ENCODE measurements at regions of chr13 and their contacts with region 1.

Region 1: GRCh38 chr13:44879463-44880058 is 109.7 kb downstream of the NUFIP1 start:
- DNase-seq: no peak
- H3K4me3 ChIP-seq: no peak overlapping the region
- CTCF ChIP-seq: no peak
- POLR2A ChIP-seq: no peak

Region 2: GRCh38 chr13:44470638-44471562 is 408.7 kb before region 1 on chr13:
- intact Hi-C with region 1: loop called (anchors 5 kb)
- DNase-seq: no peak
- H3K4me3 ChIP-seq: no peak overlapping the region
- CTCF ChIP-seq: no peak
- POLR2A ChIP-seq: no peak

Region 3: DNA sequence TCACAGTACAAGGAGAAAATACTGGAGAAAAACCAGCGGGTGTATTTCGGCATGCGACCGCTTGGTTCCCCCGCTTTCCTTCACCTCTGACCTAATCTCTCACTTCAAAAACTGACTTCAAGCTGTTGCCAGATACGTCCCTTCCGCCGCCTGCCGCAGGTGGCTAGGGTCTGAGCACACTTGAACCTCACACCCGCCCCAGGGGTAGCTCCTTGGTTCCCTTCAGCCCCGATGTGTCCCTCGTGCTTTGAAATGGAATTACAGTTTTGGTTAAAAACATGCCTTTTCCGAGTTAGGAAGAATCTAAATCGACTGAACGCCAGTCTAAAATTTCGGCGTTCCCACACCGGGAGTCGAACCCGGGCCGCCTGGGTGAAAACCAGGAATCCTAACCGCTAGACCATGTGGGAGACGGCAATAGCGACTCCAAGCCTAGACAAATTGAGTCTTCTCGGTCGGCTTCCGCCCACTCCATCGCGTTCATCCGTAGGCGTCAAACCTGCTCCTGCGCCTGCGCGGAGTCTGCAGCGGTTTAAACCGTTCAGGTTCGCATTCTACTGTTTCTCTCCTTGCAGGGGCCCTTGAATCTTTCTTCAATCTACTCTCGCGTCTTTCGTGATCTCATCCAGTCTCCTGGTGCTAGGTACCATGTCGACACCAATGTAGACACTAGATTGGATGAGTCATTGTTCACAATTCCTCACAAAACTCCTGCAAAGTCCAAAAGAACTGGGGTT is 38.2 kb after region 1 on chr13:
- intact Hi-C with region 1: no loop called
- DNase-seq: peak; percentile 95 to 100
- H3K4me3 ChIP-seq: peak overlapping the region; percentile 21
- CTCF ChIP-seq: peak in 1 of 3 donors; percentile 34
- POLR2A ChIP-seq: no peak

Measured in lower leg skin (tissue), 4 donors.